Activated T-helper 1 cell treated with anti-CD3 and anti-CD28 coated beads, Interleukin-12 subunit alpha, Interleukin-12 subunit beta, Interleukin-2, Interleukin-4 antibody, amounts not matched to agents 30 ng/mL and 10 ng/mL and 1 ng/mL, durations not matched to agents 14 hours and 24 hours and 36 hours (primary cell): ENCODE measurements at regions of chr4 and their contacts with region 1.

Region 1: GRCh38 chr4:140153718-140154571 is at the start of gene MAML3:
- DNase-seq: peak; percentile 76
- H3K4me3 Mint-ChIP-seq: peak within 1 kb of the TSS; percentile 86
- H3K27ac Mint-ChIP-seq: peak within 1 kb of the TSS; percentile 63
- H3K4me1 Mint-ChIP-seq: peaks cover 57% of the 10 kb centered on the region
- H3K27me3 Mint-ChIP-seq: peaks cover 69% of the 10 kb centered on the region
- total RNA-seq, gene MAML3: 0.32 and 0.47 TPM in 2 replicates

Region 2: DNA sequence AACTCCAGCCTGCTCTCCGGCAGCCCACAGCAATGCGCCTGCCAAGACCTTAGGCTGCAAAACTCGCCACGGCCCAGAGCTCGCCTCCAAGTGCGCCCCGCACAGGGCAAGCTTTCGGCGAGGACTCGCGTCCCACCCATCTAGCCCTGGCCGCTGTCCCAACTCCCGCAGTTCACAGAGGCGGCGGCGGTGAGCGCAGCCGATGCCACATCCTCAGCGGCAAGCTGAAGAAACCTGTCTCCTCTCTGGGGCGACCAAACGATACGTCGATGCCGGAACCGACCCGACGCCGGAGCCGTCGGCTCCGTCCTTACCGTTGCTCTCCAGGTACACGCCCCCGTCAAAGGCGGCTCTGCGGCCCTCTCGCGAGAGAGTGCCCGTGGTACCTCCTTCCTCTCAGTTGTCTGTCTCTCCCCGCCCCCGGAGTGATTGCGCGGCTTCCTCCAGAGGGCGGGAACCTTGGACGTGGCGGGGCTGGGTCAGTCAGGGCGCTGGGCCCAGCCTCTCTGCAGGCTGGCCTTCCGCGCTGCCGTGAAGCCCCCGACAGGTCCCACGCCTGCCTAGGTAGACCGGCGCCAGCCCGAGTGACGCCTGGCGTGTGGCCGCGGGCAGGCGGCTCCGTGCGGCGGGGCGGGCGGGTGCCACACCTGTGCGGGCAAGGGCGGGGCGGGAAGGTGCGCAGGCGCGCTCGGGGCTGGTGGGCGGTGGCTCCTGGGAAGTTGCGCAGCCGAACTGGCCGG is 700.4 kb before region 1 on chr4:
- intact Hi-C with region 1: loop called (anchors 5 kb)
- DNase-seq: peak; percentile 95
- H3K4me3 Mint-ChIP-seq: peak overlapping the region; percentile 94
- H3K27ac Mint-ChIP-seq: peak overlapping the region; percentile 99
- H3K4me1 Mint-ChIP-seq: peaks cover 58% of the 10 kb centered on the region
- H3K27me3 Mint-ChIP-seq: no peaks in the 10 kb centered on the region

Region 3: DNA sequence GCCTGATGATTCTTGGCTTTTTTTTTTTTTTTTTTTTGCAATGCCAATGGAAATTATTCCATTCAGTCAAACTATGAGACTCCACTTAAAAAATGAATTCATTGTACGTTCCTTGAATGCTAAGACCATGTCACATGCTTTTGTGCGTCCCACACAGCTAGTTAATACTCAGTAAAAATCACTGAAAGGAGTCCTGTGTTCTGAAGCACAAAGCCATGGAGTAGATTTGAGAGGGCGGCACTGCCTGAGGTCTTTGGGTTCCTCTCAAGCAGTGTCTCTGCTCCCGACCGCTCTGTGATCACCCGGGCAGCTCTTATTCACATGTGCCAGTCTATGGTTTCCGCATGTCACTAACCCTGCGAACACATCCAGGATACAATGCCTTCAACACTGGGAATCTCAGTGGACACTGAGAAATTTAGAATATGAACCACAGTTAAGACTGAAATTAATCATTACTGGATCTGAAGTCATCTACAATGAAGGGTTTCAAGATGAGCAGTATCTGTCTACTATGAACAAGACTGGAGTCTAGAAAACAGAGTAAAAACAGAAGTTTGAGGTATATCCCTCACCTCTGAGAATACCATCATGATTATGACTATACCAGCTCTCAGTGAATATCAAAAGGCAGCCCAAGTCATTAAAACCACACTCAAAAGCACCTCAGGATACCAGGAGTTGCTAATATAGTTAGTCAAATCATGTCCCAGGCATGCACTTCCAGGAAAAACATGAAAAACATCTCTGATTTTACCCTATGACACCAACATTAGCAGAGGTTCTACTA is 295.3 kb before region 1 on chr4:
- intact Hi-C with region 1: loop called (anchors 2 kb)
- DNase-seq: no peak
- H3K4me3 Mint-ChIP-seq: no peak overlapping the region
- H3K27ac Mint-ChIP-seq: no peak overlapping the region
- H3K4me1 Mint-ChIP-seq: peaks cover 33% of the 10 kb centered on the region
- H3K27me3 Mint-ChIP-seq: peaks cover 18% of the 10 kb centered on the region

Region 4: DNA sequence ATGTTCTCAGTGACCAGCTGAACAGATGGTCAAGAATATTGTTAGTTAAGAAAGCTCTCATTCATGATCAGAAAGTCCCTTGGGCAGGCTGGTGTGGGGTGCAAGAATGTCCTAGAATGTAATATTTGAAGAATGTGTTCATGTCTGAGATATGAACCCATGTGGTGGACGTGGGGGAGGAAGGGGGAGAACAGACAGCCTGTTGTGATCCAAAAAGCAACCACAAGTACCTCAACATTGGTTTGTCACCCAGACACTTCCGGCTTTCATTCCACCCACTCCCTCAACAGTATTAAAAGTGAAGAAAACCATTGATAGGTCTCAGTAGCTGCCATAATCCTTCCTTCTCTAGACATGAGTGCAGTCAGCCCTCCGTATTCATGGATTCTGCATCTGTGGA is 82.1 kb before region 1 on chr4:
- intact Hi-C with region 1: loop called (anchors 1 kb)
- DNase-seq: peak; percentile 62
- H3K4me3 Mint-ChIP-seq: peak overlapping the region; percentile 71
- H3K27ac Mint-ChIP-seq: peak overlapping the region; percentile 70
- H3K4me1 Mint-ChIP-seq: peaks cover 59% of the 10 kb centered on the region
- H3K27me3 Mint-ChIP-seq: peaks cover 48% of the 10 kb centered on the region

Region 5: DNA sequence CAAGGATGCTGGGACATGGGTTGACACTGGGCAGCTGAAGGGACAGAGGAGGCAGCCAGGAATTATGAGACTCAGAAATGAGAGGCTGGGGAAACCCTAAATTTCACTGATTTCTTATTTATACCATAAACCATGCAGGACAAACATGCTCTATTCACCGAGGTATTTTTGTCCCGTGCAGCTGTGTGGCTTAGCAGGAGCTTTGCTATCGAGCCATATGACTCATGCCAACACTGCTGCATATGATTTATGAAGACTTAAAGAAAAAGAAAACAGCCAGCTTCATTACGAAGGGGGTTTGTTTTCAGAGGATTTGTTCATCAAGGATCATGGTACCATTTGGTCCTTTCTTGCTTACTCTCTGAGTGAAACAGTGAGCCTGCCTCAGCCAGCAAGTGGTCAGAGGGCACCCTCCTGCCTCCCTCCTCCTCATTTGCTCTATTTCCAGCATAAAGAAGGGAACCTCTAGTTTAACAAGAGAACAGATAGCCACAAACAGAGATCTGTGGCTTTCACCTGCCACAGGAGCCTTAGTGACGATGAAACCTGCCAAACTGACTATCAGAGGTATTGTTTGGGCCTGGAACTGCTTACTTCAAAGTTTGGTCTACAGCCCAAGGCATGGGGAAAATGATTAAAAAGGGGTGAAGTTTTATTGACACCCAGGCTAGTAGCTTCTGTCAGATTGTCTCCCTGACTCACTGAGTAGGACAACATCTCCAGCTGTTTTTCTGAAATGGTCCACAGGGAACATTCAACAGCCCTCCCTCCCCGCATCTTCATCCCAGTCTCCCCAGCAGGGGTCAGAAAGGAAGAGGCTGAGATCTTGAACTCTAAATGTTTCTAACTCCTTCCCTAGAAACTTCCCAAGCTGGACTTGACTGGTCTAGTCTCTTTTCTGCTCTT is 80.1 kb after region 1 on chr4:
- intact Hi-C with region 1: loop called (anchors 2 kb)
- DNase-seq: no peak
- H3K4me3 Mint-ChIP-seq: peak overlapping the region; percentile 52
- H3K27ac Mint-ChIP-seq: peak overlapping the region; percentile 85
- H3K4me1 Mint-ChIP-seq: peaks cover 32% of the 10 kb centered on the region
- H3K27me3 Mint-ChIP-seq: peaks cover 15% of the 10 kb centered on the region

Region 6: GRCh38 chr4:140556372-140557085 is 402.6 kb after region 1 on chr4:
- intact Hi-C with region 1: loop called (anchors 5 kb)
- DNase-seq: peak; percentile 8
- H3K4me3 Mint-ChIP-seq: no peak overlapping the region
- H3K27ac Mint-ChIP-seq: no peak overlapping the region
- H3K4me1 Mint-ChIP-seq: peaks cover 17% of the 10 kb centered on the region
- H3K27me3 Mint-ChIP-seq: peaks cover 31% of the 10 kb centered on the region